ENCODE measurements at regions of chr17 and their contacts with region 1.

Region 1: GRCh38 chr17:63773381-63774140 is at the start of gene CCDC47:
- DNase-seq: peak; percentile 99
- H3K4me3 ChIP-seq: peak within 1 kb of the TSS; percentile 100
- H3K4me3 Mint-ChIP-seq: peak within 1 kb of the TSS; percentile 76
- H3K27ac Mint-ChIP-seq: peak within 1 kb of the TSS; percentile 100
- H3K4me1 ChIP-seq: no peaks in the 10 kb centered on the region; the same call in 1 of the 2 replicates
- H3K4me1 Mint-ChIP-seq: peaks cover 24% of the 10 kb centered on the region
- H3K27me3 ChIP-seq: no peaks in the 10 kb centered on the region
- H3K27me3 Mint-ChIP-seq: no peaks in the 10 kb centered on the region
- CTCF ChIP-seq: no peak
- total RNA-seq, gene CCDC47: 125 and 129 TPM in 2 replicates

Region 2: DNA sequence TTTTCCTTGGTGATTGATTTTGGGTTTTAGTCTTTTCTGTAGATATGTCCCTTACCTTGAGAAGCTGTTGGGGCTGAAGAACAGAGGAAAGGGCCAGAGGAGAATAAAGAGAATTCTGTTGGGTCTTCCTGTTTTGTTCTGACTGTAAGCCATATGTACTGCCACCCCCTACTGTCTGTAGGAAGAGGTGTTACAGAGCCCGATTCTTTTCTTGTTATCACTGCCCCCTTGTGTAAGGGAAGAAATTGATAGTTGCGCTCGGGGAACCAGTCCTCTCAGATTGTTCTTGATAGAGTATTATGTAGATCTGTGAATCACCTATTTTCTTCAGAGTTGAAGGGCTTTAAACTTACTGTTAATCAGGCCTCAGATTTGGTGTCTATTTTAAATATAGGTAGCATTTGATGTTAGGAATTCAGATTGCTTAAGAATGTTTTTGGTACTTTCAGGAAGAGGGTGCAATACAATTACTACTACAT is 805.1 kb before region 1 on chr17:
- CTCF ChIA-PET with region 1: no interaction called
- POLR2A ChIA-PET with region 1: no interaction called
- intact Hi-C with region 1: no loop called
- DNase-seq: peak; percentile 63 to 73
- H3K4me3 ChIP-seq: no peak overlapping the region
- H3K4me3 Mint-ChIP-seq: no peak overlapping the region
- H3K27ac Mint-ChIP-seq: no peak overlapping the region
- H3K4me1 ChIP-seq: no peaks in the 10 kb centered on the region
- H3K4me1 Mint-ChIP-seq: peaks cover 7% of the 10 kb centered on the region
- H3K27me3 ChIP-seq: no peaks in the 10 kb centered on the region
- H3K27me3 Mint-ChIP-seq: peaks cover 23% of the 10 kb centered on the region
- CTCF ChIP-seq: peak; percentile 87 to 95

Region 3: GRCh38 chr17:63688396-63689020 is 85.1 kb before region 1 on chr17:
- CTCF ChIA-PET with region 1: no interaction called
- POLR2A ChIA-PET with region 1: no interaction called
- intact Hi-C with region 1: no loop called
- DNase-seq: no peak
- H3K4me3 ChIP-seq: no peak overlapping the region
- H3K4me3 Mint-ChIP-seq: no peak overlapping the region
- H3K27ac Mint-ChIP-seq: no peak overlapping the region
- H3K4me1 ChIP-seq: no peaks in the 10 kb centered on the region
- H3K4me1 Mint-ChIP-seq: peaks cover 6% of the 10 kb centered on the region
- H3K27me3 ChIP-seq: no peaks in the 10 kb centered on the region
- H3K27me3 Mint-ChIP-seq: no peaks in the 10 kb centered on the region
- CTCF ChIP-seq: no peak

Region 4: DNA sequence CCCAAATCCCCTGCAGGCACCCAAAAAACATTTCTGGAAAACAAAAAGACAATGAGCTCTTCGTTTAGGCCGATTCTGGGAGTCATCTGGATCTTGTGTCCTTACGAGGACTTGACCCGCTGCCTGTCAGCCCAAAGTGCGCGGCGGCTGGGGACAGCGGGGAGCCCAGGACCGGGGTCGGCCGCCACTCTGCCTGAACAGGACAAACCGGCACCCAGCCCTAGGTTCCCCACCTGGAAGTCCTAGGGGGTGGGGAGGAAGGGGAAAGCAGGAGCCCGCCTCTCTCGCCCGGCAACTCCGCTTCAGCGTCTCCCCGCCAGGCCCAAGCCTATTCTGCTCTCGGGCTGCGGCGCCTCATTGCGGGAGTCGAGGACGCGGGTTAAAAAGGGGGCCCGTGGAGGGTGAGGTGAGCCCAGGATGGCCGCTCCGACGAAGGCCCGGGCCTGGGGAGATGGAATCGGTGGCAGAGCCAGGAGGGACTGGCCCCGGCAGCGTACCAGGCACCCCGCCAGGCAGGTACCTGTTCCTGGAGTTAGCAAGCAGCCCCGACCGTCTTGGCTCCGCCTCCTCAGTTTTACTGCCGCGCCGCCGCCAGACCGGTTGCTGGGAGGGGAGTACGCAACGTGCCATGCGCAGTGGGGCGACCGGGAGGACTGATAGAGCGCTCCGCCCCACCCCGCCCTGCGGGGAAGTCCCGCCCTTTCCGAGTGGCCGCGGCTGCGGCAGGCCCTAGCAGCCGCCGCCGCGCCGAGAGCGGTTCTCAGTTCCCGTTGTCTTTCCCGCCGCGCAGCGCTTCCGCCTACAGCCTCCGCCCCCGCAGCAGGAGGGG is 32.1 kb before region 1 on chr17 and contains the start of gene STRADA:
- CTCF ChIA-PET with region 1: interaction called, 3 read pairs
- POLR2A ChIA-PET with region 1: interaction called, 31 read pairs
- intact Hi-C with region 1: loop called (anchors 1 kb)
- DNase-seq: peak; percentile 100
- H3K4me3 ChIP-seq: peak within 1 kb of the TSS; percentile 83
- H3K4me3 Mint-ChIP-seq: peak within 1 kb of the TSS; percentile 96
- H3K27ac Mint-ChIP-seq: peak within 1 kb of the TSS; percentile 96
- H3K4me1 ChIP-seq: peaks cover 9% of the 10 kb centered on the region
- H3K4me1 Mint-ChIP-seq: peaks cover 6% of the 10 kb centered on the region
- H3K27me3 ChIP-seq: no peaks in the 10 kb centered on the region
- H3K27me3 Mint-ChIP-seq: no peaks in the 10 kb centered on the region
- CTCF ChIP-seq: no peak
- total RNA-seq, gene STRADA: 23.4 and 24.7 TPM in 2 replicates

Region 5: GRCh38 chr17:63827002-63827771 is 53.6 kb after region 1 on chr17 and contains the starts of genes FTSJ3 and PSMC5:
- CTCF ChIA-PET with region 1: no interaction called
- POLR2A ChIA-PET with region 1: interaction called, 6 read pairs
- intact Hi-C with region 1: loop called (anchors 5 kb)
- DNase-seq: peak; percentile 96
- H3K4me3 ChIP-seq: peak within 1 kb of the TSS; percentile 83
- H3K4me3 Mint-ChIP-seq: peak within 1 kb of the TSS; percentile 84
- H3K27ac Mint-ChIP-seq: peak within 1 kb of the TSS; percentile 99
- H3K4me1 ChIP-seq: peaks cover 16% of the 10 kb centered on the region; the same call in 1 of the 2 replicates
- H3K4me1 Mint-ChIP-seq: peaks cover 17% of the 10 kb centered on the region
- H3K27me3 ChIP-seq: no peaks in the 10 kb centered on the region
- H3K27me3 Mint-ChIP-seq: no peaks in the 10 kb centered on the region
- CTCF ChIP-seq: peak; percentile 63 to 80
- total RNA-seq, gene FTSJ3: 75.9 and 76.3 TPM in 2 replicates
- total RNA-seq, gene PSMC5: 197 TPM in 2 replicates

Region 6: DNA sequence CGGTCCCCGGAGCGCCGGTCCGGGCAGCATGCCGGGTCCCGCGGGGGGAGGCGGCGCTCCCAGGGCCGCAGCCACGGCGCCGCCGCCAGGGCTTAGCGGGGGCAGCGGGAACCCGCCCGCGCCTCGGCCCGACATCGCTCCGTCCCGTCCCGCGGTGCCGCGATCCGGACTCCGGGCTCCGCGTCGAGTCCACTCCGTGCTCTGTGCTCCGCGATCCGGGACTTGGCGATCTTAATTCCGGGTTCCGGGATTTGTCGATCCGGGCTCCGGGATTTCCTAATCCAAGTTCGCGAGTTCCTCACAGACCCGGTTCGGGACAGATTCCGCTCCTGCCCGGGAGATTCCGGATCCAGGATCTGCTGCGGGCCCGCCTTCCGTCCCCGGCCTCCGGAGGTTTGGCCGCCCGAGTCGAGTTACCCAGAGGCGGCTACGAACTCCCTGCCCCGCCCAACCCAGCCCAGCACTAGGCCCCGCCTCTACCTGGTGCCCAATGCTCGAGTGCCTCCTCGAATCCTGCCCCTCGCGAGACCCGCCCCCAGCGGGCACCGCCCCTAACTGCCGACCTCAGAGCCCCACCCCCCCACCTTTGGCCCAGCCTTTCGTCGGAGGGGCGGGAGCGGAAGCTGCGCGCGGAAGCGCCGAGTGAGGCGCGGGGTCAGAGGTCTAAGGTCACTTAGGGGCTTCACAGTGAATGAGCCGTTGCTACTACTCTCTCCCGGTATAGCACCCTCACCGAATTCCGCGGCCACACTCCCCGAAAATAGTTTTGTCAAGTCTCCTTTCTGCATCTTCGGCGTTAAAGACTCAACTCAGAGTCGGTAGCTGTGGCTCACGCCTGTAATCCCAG is 69.2 kb after region 1 on chr17 and contains the start of gene SMARCD2:
- CTCF ChIA-PET with region 1: no interaction called
- POLR2A ChIA-PET with region 1: interaction called, 18 read pairs
- intact Hi-C with region 1: loop called (anchors 2 kb)
- DNase-seq: peak; percentile 99
- H3K4me3 ChIP-seq: peak within 1 kb of the TSS; percentile 95
- H3K4me3 Mint-ChIP-seq: peak within 1 kb of the TSS; percentile 99
- H3K27ac Mint-ChIP-seq: peak within 1 kb of the TSS; percentile 87
- H3K4me1 ChIP-seq: peaks cover 15% of the 10 kb centered on the region
- H3K4me1 Mint-ChIP-seq: peaks cover 28% of the 10 kb centered on the region
- H3K27me3 ChIP-seq: no peaks in the 10 kb centered on the region
- H3K27me3 Mint-ChIP-seq: no peaks in the 10 kb centered on the region
- CTCF ChIP-seq: no peak
- total RNA-seq, gene SMARCD2: 134 TPM in 2 replicates

Region 7: DNA sequence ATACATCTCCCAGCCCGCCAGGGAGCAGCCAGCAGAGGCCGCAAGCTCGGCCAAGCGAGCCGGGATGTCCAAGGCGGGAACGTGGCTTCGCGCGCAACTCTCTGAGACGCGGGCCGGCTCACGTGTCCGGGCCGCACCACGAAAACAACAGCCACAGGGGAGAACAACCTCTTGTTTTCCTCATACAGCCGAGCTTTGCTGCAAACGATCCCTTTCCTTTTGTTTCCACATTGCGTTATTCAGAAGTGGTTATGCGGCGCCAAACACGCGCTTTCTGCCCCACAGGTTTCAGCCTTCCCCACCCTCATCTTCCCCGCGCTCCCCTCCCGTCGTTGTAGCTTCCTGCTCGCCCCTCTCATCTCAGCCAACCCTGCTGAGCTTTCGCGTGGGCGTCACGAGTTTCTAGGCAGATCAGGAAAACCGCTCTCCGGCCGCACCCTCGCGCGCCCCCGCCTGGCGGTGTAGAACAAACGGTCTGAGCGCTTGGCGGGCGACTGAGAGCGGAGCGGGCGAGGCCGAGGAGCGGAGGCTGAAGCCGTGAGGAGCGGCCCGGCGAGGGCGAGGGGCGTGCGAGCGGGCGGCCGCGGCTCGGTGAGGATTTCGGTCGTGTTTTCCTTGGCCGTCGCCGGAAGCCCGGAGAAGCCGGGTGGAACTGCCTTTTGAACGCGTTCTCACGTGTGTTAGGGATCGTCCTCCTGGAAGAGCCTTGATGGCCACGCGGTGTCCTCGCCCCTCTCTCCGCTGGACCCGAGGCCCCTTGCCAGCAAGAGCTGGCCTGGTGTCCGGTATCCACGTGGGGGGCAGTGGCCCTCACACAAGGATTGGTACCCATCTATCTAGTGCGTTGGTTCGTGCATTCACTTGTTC is 75.5 kb after region 1 on chr17:
- CTCF ChIA-PET with region 1: interaction called, 19 read pairs
- POLR2A ChIA-PET with region 1: interaction called, 9 read pairs
- intact Hi-C with region 1: no loop called
- DNase-seq: peak; percentile 98 to 99
- H3K4me3 ChIP-seq: peak overlapping the region; percentile 84
- H3K4me3 Mint-ChIP-seq: peak overlapping the region; percentile 90
- H3K27ac Mint-ChIP-seq: peak overlapping the region; percentile 99
- H3K4me1 ChIP-seq: peaks cover 4% of the 10 kb centered on the region; the same call in 1 of the 2 replicates
- H3K4me1 Mint-ChIP-seq: peaks cover 11% of the 10 kb centered on the region
- H3K27me3 ChIP-seq: no peaks in the 10 kb centered on the region
- H3K27me3 Mint-ChIP-seq: no peaks in the 10 kb centered on the region
- CTCF ChIP-seq: peak; percentile 59 to 89

Region 8: DNA sequence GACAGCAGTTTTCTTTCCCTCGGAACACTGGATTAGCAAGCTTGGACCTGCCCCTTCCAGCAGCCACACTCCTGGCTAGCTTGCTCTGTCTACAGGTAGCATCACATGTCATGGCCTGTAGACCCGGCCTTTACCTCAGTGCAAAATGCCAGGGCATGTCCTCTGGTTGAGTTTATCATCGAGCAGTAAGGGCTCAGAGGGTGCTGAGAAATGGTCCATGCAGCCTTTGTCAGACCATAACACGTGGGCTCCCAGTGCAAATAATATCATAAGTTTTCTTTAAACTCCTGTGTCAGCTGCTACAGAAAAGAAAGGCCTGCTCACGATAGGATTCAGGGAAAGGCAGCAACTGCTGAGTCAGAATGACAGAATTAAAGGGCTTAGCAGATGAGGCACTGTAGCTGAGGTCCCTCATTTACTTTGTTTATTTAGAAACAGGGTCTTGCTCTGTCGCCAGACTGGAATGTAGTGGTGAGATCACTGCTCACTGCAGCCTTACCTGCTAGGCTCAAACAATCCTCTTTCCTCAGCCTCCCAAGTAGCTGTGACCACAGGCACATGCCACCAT is 1291.0 kb after region 1 on chr17:
- CTCF ChIA-PET with region 1: no interaction called
- POLR2A ChIA-PET with region 1: interaction called, 13 read pairs
- intact Hi-C with region 1: no loop called
- DNase-seq: peak; percentile 49 to 64
- H3K4me3 ChIP-seq: no peak overlapping the region
- H3K4me3 Mint-ChIP-seq: no peak overlapping the region
- H3K27ac Mint-ChIP-seq: peak overlapping the region; percentile 89
- H3K4me1 ChIP-seq: peaks cover 41% of the 10 kb centered on the region
- H3K4me1 Mint-ChIP-seq: peaks cover 30% of the 10 kb centered on the region
- H3K27me3 ChIP-seq: no peaks in the 10 kb centered on the region
- H3K27me3 Mint-ChIP-seq: no peaks in the 10 kb centered on the region
- CTCF ChIP-seq: no peak